ENCODE measurements at regions of chr19 and their contacts with region 1.

Region 1: DNA sequence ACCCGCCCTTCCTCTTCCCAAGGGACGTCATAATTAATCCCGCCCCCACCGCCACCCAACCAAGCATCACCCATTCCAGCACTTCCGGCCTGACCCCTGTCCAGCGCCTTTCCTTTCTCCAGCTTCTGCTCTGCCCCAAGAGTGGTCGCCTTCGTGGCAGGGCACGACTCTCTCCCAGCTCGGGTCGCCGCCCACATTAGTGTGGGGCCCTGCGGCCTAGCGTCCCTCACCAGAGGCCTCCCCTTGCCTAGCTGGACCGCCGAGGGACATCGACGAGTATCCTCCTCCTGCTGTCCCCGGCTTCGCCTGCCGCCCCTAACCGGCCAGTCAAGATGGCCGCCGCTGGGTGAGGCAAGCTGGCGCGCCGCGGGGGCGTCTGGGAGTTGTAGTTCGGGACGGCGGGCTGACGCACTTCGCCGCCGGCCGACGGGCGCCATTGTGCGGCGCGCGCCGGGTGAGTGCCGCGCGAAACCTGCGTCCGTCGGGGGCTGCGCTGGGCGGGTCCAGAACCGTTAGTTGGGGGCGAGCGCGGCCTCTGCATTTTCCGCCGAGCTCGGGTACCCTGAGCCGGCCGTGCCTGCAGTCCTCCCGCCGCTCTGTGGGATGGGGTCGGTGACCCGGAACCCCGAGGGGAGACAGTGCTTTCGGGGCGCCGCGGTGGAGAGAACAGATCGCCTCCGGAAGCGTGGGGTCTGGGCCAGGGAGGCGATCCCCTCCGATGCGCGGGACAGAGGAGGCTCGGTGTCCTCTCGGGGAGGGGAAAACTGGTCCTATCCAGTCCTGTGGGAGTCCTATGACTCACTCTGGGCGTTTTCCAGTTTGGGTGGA is at the start of gene ZNF274:
- DNase-seq: peak; percentile 88
- H3K4me3 Mint-ChIP-seq: peak within 1 kb of the TSS; percentile 89
- H3K27ac Mint-ChIP-seq: peak within 1 kb of the TSS; percentile 94
- H3K4me1 Mint-ChIP-seq: peaks cover 8% of the 10 kb centered on the region
- H3K27me3 Mint-ChIP-seq: no peaks in the 10 kb centered on the region
- total RNA-seq, gene ZNF274: 18.4 and 19.9 TPM in 2 replicates

Region 2: DNA sequence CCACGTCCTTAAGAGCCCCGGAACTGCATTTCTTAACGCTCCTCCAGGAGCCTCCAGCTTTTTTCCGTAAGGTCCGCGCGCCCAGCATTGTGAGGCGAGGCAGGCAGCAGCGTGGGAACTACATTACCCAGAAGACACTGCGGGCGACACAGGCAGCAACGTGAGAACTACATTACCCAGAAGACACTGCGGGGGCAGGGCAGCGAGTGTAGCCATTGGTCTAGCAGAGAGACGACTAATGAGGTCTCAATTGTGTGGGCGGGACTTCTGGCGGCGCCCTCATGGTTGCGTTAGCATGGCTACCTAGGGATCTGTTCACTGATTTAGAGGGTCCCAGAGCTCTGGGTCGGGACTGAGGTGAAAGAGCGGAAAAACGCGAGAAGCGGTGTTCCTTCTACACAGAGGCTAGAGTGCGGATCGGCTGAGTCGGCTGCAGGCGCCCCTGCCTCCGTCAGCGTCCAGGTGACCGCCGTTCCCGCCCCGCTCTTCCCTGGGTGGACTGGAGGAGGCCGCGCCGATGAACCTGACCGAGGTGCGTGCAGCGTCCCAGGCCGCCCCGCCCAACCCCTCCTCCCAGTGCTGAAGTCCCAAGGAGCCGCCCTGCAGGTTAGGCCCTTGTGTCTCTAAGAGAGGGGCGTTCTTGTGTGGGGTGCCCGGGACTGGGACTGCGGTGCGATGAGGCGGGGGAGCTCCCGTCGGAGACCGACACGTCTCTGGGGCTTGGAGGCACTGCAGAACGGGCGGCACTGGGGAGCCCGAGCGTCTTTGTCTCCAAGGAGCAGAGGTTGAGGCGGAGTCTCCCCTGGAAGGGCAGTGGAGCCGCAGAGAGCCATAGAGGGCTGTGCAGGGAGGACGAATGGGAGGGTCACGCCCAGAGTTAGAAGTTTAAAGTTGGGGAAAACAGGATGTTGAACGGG is 747.9 kb before region 1 on chr19 and contains the start of gene ZNF749:
- intact Hi-C with region 1: loop called (anchors 1 kb)
- DNase-seq: peak; percentile 96
- H3K4me3 Mint-ChIP-seq: peak within 1 kb of the TSS; percentile 98
- H3K27ac Mint-ChIP-seq: peak within 1 kb of the TSS; percentile 96
- H3K4me1 Mint-ChIP-seq: peaks cover 16% of the 10 kb centered on the region
- H3K27me3 Mint-ChIP-seq: no peaks in the 10 kb centered on the region
- total RNA-seq, gene ZNF749: 21.0 and 21.5 TPM in 2 replicates

Region 3: GRCh38 chr19:58117841-58118575 is 65.2 kb before region 1 on chr19:
- intact Hi-C with region 1: no loop called
- DNase-seq: no peak
- H3K4me3 Mint-ChIP-seq: no peak overlapping the region
- H3K27ac Mint-ChIP-seq: no peak overlapping the region
- H3K4me1 Mint-ChIP-seq: no peaks in the 10 kb centered on the region
- H3K27me3 Mint-ChIP-seq: no peaks in the 10 kb centered on the region

Region 4: GRCh38 chr19:58217069-58217481 is 33.9 kb after region 1 on chr19:
- intact Hi-C with region 1: no loop called
- DNase-seq: no peak
- H3K4me3 Mint-ChIP-seq: no peak overlapping the region
- H3K27ac Mint-ChIP-seq: no peak overlapping the region
- H3K4me1 Mint-ChIP-seq: no peaks in the 10 kb centered on the region
- H3K27me3 Mint-ChIP-seq: no peaks in the 10 kb centered on the region

Region 5: GRCh38 chr19:58228585-58229254 is 45.5 kb after region 1 on chr19 and contains the start of gene ZNF544:
- intact Hi-C with region 1: loop called (anchors 1 kb)
- DNase-seq: peak; percentile 52
- H3K4me3 Mint-ChIP-seq: peak within 1 kb of the TSS; percentile 92
- H3K27ac Mint-ChIP-seq: peak within 1 kb of the TSS; percentile 91
- H3K4me1 Mint-ChIP-seq: peaks cover 13% of the 10 kb centered on the region
- H3K27me3 Mint-ChIP-seq: no peaks in the 10 kb centered on the region
- total RNA-seq, gene ZNF544: 42.0 and 49.1 TPM in 2 replicates

Region 6: DNA sequence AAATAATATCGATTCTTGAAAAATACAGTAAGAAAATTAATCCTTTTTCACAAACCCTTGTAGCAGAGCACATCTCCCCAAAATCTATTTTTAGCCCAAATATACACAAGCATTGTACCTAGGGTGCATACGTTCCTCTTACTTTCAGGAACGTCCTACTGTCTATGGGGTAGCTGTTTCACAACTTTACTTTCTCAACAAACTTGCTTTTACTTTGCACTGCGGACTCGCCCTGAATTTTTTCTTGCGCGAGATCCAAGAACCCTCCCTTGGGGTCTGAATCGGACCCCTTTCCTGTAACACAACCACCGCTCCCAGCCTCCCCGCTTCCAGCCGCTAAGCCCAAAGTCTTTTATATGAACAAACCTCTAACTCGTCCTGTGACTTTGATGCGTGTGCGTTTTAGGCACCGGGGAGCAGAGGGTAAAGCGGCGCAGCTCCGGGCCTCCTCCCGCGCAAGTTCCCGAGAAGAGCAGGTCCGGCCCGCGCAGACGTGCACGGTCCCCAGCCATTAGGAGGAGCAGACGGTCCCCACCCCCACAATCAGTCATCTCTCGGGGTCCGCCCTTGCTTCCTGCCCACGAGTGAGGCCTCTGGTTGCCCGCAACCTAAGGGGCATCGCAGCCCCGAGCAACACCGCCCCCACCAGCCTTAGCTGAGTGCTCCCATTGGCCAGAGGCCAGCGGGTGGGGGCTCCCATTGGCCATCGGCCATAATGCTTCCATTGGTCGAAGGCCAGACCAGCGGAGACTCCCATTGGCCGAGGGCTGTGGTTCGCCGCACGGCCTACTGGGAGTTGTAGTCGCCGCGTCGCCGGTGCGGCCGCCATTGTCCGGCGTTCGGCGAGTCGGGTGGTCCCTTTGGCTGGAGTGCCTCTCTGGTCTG is 95.2 kb after region 1 on chr19 and contains the start of gene ZNF8:
- intact Hi-C with region 1: loop called (anchors 1 kb)
- DNase-seq: peak; percentile 96
- H3K4me3 Mint-ChIP-seq: peak within 1 kb of the TSS; percentile 94
- H3K27ac Mint-ChIP-seq: peak within 1 kb of the TSS; percentile 94
- H3K4me1 Mint-ChIP-seq: peaks cover 21% of the 10 kb centered on the region
- H3K27me3 Mint-ChIP-seq: no peaks in the 10 kb centered on the region
- total RNA-seq, gene ZNF8: 4.7 and 5.3 TPM in 2 replicates

Region 7: DNA sequence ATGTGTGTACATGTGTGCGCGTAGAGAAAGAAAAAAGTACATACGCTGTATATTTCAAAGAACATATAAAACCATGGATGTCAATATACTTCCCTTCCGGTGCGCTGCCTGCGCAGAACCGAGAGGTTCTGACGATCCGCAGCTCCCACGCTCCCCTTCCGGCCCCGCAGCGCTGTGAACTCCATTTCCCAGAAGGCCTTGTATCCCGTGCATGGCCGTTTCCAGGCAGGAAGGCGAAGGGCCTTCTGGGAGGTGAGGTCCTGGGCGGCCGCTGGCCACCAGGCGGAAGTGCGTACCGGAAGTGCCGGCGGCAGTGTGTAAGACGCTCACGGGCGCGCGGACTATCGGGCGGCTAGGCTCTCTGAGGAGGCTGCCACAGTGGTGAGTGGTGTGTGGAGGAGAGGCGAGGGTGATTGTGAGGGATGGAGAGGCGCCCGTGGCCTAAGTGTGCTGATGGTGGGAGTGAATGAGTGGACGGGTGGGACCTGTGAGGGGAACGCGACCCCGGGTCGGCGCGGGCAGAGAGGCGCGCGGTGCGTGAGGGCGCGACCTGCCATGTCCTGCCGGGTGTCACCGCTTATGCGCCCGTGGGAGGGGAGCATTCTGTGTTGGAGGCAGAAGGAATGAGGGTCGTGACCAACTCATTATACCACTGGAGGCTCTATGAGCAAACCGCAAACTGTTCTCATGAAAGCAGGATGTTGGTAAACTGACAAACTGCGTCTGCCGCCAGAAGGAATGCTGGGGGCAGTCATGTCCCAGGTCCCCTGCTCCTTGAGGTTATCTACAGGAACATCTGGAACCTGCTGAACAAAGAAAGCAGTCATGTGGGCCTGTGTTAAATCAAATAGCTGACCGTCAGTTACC is 122.1 kb after region 1 on chr19 and contains the start of gene ERVK3-1:
- intact Hi-C with region 1: loop called (anchors 2 kb)
- DNase-seq: peak; percentile 93
- H3K4me3 Mint-ChIP-seq: peak within 1 kb of the TSS; percentile 98
- H3K27ac Mint-ChIP-seq: peak within 1 kb of the TSS; percentile 97
- H3K4me1 Mint-ChIP-seq: peaks cover 37% of the 10 kb centered on the region
- H3K27me3 Mint-ChIP-seq: no peaks in the 10 kb centered on the region
- total RNA-seq, gene ERVK3-1: 64.2 and 65.0 TPM in 2 replicates

Region 8: DNA sequence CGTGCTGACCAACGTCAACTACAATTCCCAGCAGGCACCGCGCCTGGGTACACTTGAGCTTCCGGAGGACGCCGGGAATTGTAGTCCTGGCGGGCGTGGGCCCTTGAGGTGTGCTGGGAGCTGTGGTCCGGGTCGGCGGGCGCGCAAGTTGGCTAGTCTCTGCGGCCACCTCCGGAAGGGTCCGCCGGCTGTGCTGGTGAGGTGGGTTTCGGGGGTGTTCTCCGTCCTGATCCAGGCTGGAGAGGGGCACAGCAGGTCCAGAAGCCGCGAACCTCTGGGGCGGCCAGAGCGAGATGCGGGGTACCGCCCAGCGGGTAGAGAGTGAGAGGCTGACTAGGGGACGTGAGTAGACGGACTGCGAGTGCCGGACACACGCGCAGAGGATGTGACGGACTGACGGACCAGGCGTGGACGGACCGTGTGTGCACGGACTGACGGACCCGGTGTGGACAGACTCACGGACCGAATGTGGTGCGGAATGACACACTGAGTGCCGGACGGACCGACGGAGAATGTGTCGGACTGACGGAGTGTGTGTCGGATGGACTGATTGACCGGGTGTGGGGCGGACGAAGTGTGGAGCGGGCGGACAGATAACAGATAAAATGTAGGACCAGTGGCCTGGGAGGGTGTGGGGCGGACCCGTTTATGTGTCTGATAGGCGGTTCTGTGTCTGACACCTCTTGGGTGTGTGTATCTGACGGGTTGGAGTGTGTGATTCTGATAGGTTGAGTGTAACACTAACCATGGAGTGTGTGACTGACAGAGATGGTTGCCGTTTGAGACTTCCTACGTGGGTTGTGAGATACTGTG is 143.9 kb after region 1 on chr19 and contains the start of gene ZSCAN22:
- intact Hi-C with region 1: loop called (anchors 1 kb)
- DNase-seq: peak; percentile 86
- H3K4me3 Mint-ChIP-seq: no peak within 1 kb of the TSS
- H3K27ac Mint-ChIP-seq: no peak within 1 kb of the TSS
- H3K4me1 Mint-ChIP-seq: peaks cover 2% of the 10 kb centered on the region
- H3K27me3 Mint-ChIP-seq: no peaks in the 10 kb centered on the region
- total RNA-seq, gene ZSCAN22: 4.6 and 4.9 TPM in 2 replicates

Region 9: GRCh38 chr19:58386576-58387337 is 203.6 kb after region 1 on chr19 and contains the start of gene RPS5:
- intact Hi-C with region 1: loop called (anchors 2 kb)
- DNase-seq: peak; percentile 96
- H3K4me3 Mint-ChIP-seq: peak within 1 kb of the TSS; percentile 96
- H3K27ac Mint-ChIP-seq: peak within 1 kb of the TSS; percentile 94
- H3K4me1 Mint-ChIP-seq: peaks cover 29% of the 10 kb centered on the region
- H3K27me3 Mint-ChIP-seq: no peaks in the 10 kb centered on the region
- total RNA-seq, gene RPS5: 1,217 and 1,244 TPM in 2 replicates

Measured in activated T-helper 2 cell treated with anti-CD3 and anti-CD28 coated beads, Interferon-gamma antibody, Interleukin-2, Interleukin-4, amounts not matched to agents 10 μg/mL and 5 μg/mL and 100 μg/mL, durations not matched to agents 14 hours and 24 hours and 36 hours (primary cell).